ENCODE measurements at regions of chr9 and their contacts with region 1.

Region 1: GRCh38 chr9:76987594-76988200 is 31.8 kb upstream of the FOXB2 start:
- DNase-seq: no peak
- H3K4me3 ChIP-seq: no peak overlapping the region
- H3K27ac ChIP-seq: no peak overlapping the region
- H3K4me1 ChIP-seq: no peaks in the 10 kb centered on the region
- H3K27me3 ChIP-seq: no peaks in the 10 kb centered on the region
- CTCF ChIP-seq: peak in 3 of 4 experiments; percentile 44 to 59 (median 54)
- POLR2A ChIP-seq: no peak

Region 2: DNA sequence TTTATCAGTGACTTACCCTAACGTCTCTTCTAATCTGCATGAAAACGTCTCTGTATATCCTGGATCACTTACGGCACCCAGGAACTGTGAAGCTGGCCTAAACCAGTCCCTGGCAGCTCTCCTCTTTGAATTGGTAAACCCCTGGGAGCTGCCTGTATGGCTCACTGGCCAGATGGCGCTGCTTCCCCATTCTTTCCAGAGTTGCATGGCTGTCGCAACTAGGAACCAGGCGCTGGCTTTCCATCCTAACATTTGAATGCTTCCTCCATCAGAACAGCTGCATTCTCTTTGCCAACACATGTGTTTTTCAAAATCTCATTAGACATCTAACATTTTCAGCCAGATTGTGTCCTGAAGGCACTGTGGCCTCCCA is 231.4 kb before region 1 on chr9:
- intact Hi-C with region 1: loop called (anchors 2 kb)
- DNase-seq: peak; percentile 6
- H3K4me3 ChIP-seq: no peak overlapping the region
- H3K27ac ChIP-seq: no peak overlapping the region
- H3K4me1 ChIP-seq: no peaks in the 10 kb centered on the region
- H3K27me3 ChIP-seq: no peaks in the 10 kb centered on the region
- CTCF ChIP-seq: no peak
- POLR2A ChIP-seq: no peak

Region 3: DNA sequence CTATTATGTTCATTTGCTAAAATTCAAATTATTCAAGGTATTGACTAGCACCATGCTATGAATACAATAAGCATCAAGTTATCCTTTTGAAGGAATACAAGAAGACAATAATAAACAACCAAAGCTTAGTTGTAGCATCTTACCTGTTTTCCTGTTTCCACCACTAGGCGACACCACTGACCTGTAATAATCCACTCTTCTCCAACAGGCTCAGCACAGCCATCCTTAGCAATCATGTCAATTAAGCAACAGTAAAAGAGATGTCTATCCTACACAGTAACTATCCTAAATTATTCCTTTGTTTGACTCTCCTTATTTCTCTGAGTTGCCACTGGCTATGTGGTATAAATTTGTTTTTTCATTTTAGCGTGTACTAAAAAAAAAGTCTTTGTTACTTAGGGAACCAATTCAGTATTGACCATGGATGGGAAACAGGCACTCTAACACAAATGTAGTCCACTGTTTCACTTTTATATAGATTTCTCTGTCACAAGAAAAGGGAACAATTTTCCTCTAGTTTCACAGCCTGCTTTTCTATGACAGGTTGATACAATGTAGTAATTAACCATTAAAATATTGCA is 177.2 kb before region 1 on chr9:
- intact Hi-C with region 1: loop called (anchors 5 kb)
- DNase-seq: peak; percentile 53
- H3K4me3 ChIP-seq: no peak overlapping the region
- H3K27ac ChIP-seq: peak overlapping the region in 1 of 2 donors; percentile 19
- H3K4me1 ChIP-seq: no peaks in the 10 kb centered on the region
- H3K27me3 ChIP-seq: no peaks in the 10 kb centered on the region
- CTCF ChIP-seq: peak; percentile 30 to 92 (median 84)
- POLR2A ChIP-seq: no peak

Region 4: GRCh38 chr9:76905791-76906650 is 81.7 kb before region 1 on chr9 and contains the start of gene PRUNE2:
- intact Hi-C with region 1: loop called (anchors 10 kb)
- DNase-seq: peak; percentile 55
- H3K4me3 ChIP-seq: peak within 1 kb of the TSS; percentile 33 to 45
- H3K27ac ChIP-seq: peak within 1 kb of the TSS; percentile 56 to 72
- H3K4me1 ChIP-seq: no peaks in the 10 kb centered on the region
- H3K27me3 ChIP-seq: no peaks in the 10 kb centered on the region
- CTCF ChIP-seq: peak in 1 of 4 experiments; percentile 9
- POLR2A ChIP-seq: peak; percentile 32
- total RNA-seq, gene PRUNE2: 58.6 to 78.9 TPM

Region 5: GRCh38 chr9:77011973-77012821 is 24.5 kb after region 1 on chr9:
- intact Hi-C with region 1: no loop called
- DNase-seq: no peak
- H3K4me3 ChIP-seq: no peak overlapping the region
- H3K27ac ChIP-seq: no peak overlapping the region
- H3K4me1 ChIP-seq: peaks cover 2% of the 10 kb centered on the region
- H3K27me3 ChIP-seq: peaks cover 55% of the 10 kb centered on the region
- CTCF ChIP-seq: peak in 3 of 4 experiments; percentile 13 to 51 (median 49)
- POLR2A ChIP-seq: no peak